ENCODE measurements at regions of chr5 and their contacts with region 1.

Region 1: GRCh38 chr5:142108432-142109330 is at the start of gene NDFIP1:
- DNase-seq: peak; percentile 85
- H3K4me3 Mint-ChIP-seq: peak within 1 kb of the TSS; percentile 97
- H3K27ac Mint-ChIP-seq: peak within 1 kb of the TSS; percentile 100
- H3K4me1 Mint-ChIP-seq: peaks cover 80% of the 10 kb centered on the region
- H3K27me3 Mint-ChIP-seq: no peaks in the 10 kb centered on the region
- total RNA-seq, gene NDFIP1: 119 and 129 TPM in 2 replicates

Region 2: GRCh38 chr5:141878711-141879425 is 229.8 kb before region 1 on chr5:
- intact Hi-C with region 1: no loop called
- DNase-seq: peak; percentile 81
- H3K4me3 Mint-ChIP-seq: peak overlapping the region; percentile 76
- H3K27ac Mint-ChIP-seq: peak overlapping the region; percentile 37
- H3K4me1 Mint-ChIP-seq: peaks cover 25% of the 10 kb centered on the region
- H3K27me3 Mint-ChIP-seq: peaks cover 80% of the 10 kb centered on the region

Region 3: GRCh38 chr5:141968914-141969608 is 139.6 kb before region 1 on chr5 and contains the start of gene RNF14:
- intact Hi-C with region 1: loop called (anchors 1 kb)
- DNase-seq: peak; percentile 95
- H3K4me3 Mint-ChIP-seq: peak within 1 kb of the TSS; percentile 92
- H3K27ac Mint-ChIP-seq: peak within 1 kb of the TSS; percentile 93
- H3K4me1 Mint-ChIP-seq: peaks cover 26% of the 10 kb centered on the region
- H3K27me3 Mint-ChIP-seq: no peaks in the 10 kb centered on the region
- total RNA-seq, gene RNF14: 26.4 and 28.7 TPM in 2 replicates

Region 4: DNA sequence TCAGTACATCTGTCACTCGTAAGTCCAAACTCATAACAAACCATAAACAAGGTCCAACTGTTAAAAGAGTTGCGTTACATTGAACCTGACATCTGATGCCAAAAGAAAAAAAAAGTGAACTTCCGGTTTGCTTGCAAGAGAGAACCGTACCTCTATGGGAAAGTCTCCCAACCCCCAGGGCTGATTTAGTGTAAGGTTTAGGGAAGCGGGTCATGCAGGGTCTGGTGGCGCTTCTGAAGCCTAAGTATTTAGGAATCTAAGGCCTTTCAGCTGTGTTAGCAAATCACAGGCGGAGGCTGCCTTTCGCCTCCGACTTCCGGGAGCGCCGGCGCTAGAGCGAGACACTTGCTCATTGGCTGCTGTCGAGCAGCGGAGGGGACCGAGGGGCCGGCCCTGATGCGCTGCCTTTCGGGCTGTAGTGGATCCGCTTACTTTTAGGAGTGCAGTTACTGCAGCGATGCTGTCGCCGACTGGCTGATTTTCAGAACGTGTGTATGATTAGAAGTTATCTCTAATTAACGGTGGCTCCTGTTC is 83.8 kb before region 1 on chr5:
- intact Hi-C with region 1: loop called (anchors 1 kb)
- DNase-seq: peak; percentile 83
- H3K4me3 Mint-ChIP-seq: peak overlapping the region; percentile 89
- H3K27ac Mint-ChIP-seq: peak overlapping the region; percentile 100
- H3K4me1 Mint-ChIP-seq: peaks cover 23% of the 10 kb centered on the region
- H3K27me3 Mint-ChIP-seq: no peaks in the 10 kb centered on the region

Region 5: GRCh38 chr5:142082182-142082781 is 26.4 kb before region 1 on chr5:
- intact Hi-C with region 1: loop called (anchors 1 kb)
- DNase-seq: no peak
- H3K4me3 Mint-ChIP-seq: no peak overlapping the region
- H3K27ac Mint-ChIP-seq: peak overlapping the region; percentile 50
- H3K4me1 Mint-ChIP-seq: peaks cover 29% of the 10 kb centered on the region
- H3K27me3 Mint-ChIP-seq: peaks cover 2% of the 10 kb centered on the region

Region 6: GRCh38 chr5:142120247-142120935 is 11.7 kb after region 1 on chr5:
- intact Hi-C with region 1: loop called (anchors 1 kb)
- DNase-seq: no peak
- H3K4me3 Mint-ChIP-seq: peak overlapping the region; percentile 44
- H3K27ac Mint-ChIP-seq: peak overlapping the region; percentile 68
- H3K4me1 Mint-ChIP-seq: peaks cover 69% of the 10 kb centered on the region
- H3K27me3 Mint-ChIP-seq: no peaks in the 10 kb centered on the region

Region 7: DNA sequence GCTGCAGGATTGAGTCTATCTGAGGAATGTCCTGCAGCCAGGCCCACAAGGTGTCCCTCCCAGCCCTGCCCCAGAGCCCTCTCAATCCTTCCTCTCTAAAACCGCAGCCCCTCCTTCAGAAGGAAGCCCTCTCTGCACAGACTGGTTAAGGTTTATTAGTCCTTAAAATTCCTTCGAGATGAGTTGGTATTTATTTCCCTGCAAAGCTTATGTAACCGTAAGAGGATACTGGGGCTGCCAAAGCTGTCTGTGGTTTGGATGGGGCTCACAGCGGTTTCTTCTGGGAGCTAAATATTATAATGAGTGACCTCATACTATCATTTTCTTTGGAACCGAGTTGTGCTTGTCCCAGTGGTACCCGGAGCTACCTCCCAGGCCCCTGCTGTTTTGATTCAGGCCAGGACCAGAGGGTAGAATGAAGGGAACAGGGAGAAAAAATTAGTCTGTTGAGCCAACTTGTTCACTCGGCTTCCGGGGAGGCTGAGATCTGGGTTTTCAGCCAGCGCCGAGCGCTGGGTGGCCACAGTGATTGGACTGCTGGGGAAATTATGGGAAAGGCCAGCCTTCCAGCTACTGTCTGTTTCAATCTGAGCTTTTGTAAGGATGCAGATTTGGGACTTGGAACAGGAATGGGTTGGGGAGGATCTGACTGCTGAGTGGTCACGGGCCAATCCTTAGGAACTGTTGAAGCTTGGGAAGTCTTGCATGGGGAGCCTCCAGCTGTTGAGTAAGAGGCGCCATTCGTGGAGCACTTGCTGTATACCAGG is 107.4 kb after region 1 on chr5:
- intact Hi-C with region 1: no loop called
- DNase-seq: no peak
- H3K4me3 Mint-ChIP-seq: no peak overlapping the region
- H3K27ac Mint-ChIP-seq: no peak overlapping the region
- H3K4me1 Mint-ChIP-seq: peaks cover 6% of the 10 kb centered on the region
- H3K27me3 Mint-ChIP-seq: peaks cover 6% of the 10 kb centered on the region

Region 8: DNA sequence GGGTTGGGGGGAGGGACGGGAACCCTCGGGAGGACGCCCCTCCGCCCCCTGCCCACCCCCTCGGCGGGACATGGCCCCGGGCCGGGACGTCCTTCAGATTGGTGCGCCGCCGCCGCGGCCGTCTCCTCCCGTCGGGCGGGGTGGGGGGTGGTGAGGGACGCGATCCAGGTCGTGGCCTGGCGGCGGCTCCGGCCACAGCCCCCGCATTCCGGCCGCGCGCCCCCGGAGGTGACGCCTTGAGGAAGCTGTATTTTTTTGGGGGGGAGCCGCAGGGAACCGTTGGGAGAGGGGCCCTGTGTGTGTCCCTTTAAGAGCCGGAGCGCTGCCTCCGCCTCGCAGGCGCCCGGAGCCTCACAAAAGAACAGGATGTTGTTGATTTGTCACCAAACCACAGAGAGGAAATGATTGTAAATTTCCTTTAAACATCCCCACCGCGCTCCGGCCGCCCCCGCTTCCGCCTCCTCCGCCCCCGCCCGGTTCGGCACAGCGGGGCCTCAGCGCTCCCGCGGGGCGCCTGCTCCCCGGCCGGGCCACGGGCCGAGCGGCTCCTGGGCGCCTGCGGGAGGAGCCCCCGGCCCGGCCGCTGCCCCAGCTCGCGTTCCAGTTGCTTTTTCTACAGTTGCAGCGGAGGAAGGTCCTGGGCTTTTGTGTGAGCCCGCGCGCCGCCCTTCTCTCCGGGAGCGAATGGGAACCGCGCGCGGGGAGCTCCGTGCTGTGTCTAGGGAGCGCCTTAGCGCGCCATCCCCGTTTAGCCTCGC is 248.2 kb after region 1 on chr5:
- intact Hi-C with region 1: loop called (anchors 2 kb)
- DNase-seq: peak; percentile 88
- H3K4me3 Mint-ChIP-seq: peak overlapping the region; percentile 84
- H3K27ac Mint-ChIP-seq: peak overlapping the region; percentile 92
- H3K4me1 Mint-ChIP-seq: peaks cover 58% of the 10 kb centered on the region
- H3K27me3 Mint-ChIP-seq: no peaks in the 10 kb centered on the region

Measured in activated T-helper 1 cell treated with anti-CD3 and anti-CD28 coated beads, Interleukin-12 subunit alpha, Interleukin-12 subunit beta, Interleukin-2, Interleukin-4 antibody, amounts not matched to agents 30 ng/mL and 10 ng/mL and 1 ng/mL, durations not matched to agents 14 hours and 24 hours and 36 hours (primary cell).